Activated naive CD4-positive, alpha-beta T cell treated with anti-CD3 and anti-CD28 coated beads, Interleukin-2, amount 10 ng/mL, durations not matched to agents 7 days and 5 days (primary cell): ENCODE measurements at regions of chr20 and their contacts with region 1.

Region 1: DNA sequence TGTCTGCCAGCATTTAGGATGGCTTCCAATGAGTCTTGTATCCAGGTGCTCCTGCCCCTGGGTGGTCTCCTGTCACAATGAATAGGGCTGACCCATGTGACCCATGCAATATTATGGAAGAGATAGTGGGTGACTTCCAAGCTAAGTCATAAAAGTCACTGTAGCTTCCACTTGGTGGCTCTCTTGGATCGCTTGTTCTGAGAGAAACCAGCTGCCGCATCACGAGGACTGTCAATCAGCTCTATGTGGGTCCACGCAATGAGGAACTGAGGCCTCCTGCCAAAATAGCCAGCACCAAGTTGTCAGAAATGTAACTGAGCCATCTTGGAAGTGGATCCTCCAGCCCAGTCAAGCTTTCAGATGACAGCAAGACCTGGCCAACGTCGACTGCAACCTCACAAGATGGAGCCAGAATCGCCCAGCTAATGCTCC is 14.9 kb upstream of the MATN4 start:
- DNase-seq: no peak
- H3K4me3 Mint-ChIP-seq: no peak overlapping the region
- H3K27ac Mint-ChIP-seq: no peak overlapping the region
- H3K4me1 Mint-ChIP-seq: peaks cover 35% of the 10 kb centered on the region
- H3K27me3 Mint-ChIP-seq: peaks cover 9% of the 10 kb centered on the region

Region 2: DNA sequence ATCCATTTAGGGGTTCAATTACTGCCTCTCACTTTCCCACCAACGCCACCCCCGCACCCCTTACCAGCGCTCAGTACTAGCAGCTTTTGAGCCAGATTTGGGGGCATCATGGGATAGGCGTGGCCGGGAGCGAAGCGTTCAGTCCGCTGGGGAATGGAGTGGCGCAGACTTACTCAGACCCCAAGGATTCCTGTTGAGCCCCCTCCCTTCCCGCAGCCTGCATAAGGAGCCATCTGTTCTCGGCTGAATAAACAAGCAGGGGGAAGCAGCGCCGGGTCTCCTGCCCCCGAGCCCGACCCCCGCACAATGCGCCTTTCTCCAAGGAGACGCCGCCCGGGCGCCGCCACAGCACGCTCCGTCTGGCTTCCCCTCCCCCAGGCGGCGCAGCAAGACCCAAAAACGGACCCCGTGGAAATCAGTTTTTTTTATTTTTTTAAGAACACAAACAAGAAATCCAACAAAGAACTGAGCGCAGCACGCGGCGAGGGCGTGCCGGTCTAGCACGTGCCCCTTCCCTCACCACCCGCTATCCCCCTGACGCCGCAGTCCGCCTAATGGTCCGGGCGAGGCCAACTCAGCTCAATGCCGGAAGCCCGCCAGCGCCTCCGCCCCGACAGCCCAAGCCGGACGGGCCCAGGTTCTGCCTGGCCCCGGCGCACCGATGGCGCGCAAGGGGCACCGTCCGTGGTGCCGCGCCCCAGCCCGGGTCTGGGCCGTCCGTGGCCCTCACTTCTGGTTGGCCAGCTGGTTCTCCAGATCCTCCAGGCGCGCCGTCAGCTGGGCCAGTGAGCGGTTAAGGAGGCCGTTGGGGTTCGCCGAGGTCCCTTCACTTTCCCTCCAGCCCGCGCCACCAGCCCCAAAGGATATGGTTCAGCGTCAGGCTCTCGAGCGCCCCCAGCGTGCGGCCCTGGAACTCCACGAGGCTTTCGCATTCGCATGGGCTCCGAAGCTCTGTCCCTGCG is 29.6 kb before region 1 on chr20:
- CTCF ChIA-PET with region 1: interaction called, 25 read pairs
- DNase-seq: peak; percentile 87
- H3K4me3 Mint-ChIP-seq: peak overlapping the region; percentile 64
- H3K27ac Mint-ChIP-seq: no peak overlapping the region
- H3K4me1 Mint-ChIP-seq: peaks cover 7% of the 10 kb centered on the region
- H3K27me3 Mint-ChIP-seq: peaks cover 59% of the 10 kb centered on the region

Region 3: DNA sequence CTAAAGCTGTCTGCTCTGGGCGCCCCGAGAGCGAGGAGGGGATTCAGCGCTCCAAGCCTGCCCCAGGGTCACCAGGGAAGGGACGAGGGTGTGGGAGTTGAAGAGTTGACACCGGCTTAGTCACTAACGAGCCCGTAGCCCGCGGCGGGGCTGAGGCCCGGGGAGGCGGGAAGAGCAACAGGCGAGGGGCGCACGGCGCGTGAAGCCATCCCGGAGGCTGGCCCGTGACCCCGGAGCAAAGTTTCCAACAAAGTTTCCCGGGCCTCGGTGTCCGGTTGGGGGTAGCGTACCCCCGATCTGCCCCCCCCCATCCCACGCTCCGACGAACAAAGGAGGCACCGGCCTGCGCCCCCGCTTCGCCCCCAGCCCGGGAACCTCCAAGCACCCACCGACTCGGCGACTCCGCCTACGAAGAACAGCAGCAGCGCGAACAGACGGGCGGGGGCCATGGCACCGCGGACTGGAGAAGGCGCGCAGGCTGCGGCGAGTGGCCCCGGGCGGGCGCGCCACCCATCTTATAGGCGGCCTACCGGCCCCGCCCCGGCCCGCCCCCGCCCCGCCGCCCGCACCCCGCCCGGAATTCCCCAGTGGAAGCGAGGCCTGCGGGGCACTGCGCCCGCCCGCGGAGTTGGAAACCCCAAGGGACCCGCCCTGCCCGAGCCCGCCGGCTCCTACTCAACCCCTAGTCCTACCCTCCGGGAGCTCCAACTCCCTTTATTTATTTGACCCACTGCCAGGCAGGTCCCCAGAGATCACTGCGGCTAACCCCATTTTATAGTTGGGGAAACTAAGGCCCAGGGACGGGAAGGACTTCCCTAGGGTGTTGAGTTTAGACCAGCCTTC is 25.2 kb after region 1 on chr20 and contains the start of gene SDC4:
- CTCF ChIA-PET with region 1: interaction called, 16 read pairs
- DNase-seq: peak; percentile 64
- H3K4me3 Mint-ChIP-seq: peak within 1 kb of the TSS; percentile 77
- H3K27ac Mint-ChIP-seq: no peak within 1 kb of the TSS
- H3K4me1 Mint-ChIP-seq: peaks cover 24% of the 10 kb centered on the region
- H3K27me3 Mint-ChIP-seq: peaks cover 38% of the 10 kb centered on the region

Region 4: DNA sequence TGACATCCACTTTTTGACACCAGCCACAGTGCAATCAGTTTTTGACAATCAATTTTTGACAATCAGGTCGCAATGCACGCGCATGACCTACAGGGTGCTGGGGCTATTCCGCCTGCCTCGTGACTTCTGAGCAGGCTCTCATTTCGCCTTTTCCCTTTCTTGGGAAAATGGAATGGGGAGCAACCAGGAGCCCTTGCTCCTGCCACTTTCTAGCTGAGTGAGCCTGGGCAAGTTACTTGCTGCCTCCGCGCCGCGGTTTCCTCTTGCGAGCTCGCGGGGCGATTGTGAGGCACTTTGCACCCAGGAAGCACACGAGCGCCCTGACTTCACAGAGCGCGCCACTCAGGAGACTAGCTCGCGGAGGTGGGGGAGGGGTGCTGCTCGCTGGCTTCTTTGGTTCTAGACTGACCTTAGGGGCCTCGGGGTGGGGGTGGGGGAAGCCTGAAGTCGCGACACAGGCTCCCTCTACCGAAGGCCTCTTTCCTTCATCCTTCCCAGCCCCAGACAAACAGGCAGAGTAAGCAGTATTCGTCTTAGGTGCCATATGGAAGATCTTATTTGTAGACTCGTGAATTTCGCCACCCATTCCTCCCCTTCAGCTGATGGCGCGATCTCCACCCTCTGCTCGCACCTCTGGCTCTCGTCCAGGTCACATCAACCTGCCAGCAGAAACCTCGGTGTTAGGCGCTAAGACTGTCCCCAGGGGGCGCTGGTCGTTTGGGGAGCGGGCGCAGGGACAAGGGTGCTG is 50.6 kb after region 1 on chr20:
- CTCF ChIA-PET with region 1: interaction called, 27 read pairs
- DNase-seq: peak; percentile 90
- H3K4me3 Mint-ChIP-seq: peak overlapping the region; percentile 70
- H3K27ac Mint-ChIP-seq: peak overlapping the region; percentile 87
- H3K4me1 Mint-ChIP-seq: peaks cover 44% of the 10 kb centered on the region
- H3K27me3 Mint-ChIP-seq: no peaks in the 10 kb centered on the region

Region 5: DNA sequence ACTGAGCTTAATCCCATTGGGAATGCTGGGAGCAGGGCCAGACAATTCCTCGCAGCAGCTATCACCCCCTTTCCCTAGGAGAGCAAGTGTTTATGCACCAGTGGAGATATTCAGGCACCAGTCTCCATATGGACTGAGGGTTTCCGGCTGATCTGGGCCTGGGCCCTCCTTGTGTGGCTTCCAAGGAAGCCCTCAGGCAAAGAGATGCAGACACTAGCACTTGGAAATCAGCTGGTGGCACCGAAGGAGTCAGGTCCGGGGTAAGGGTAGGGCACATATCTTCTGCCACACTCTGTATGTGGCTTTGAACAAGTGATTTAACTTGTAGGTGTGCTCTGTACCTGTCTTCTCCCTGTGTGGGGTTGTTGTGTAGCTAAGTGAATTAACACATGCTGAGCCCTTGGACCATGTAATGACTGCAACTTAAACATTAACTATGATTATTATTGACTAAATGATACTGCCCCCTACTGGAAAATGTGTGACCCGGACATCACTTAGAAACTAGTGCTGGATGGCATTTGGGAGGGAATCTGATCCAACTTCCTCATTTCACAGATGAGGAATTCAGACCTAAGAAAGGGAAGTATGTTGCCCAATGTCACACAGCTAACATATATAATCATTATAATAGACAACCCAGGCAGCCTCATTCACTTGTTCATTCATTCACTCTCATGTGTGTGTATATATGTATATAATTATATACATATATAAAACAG is 127.3 kb after region 1 on chr20:
- CTCF ChIA-PET with region 1: interaction called, 27 read pairs
- DNase-seq: peak; percentile 41
- H3K4me3 Mint-ChIP-seq: no peak overlapping the region
- H3K27ac Mint-ChIP-seq: no peak overlapping the region
- H3K4me1 Mint-ChIP-seq: peaks cover 11% of the 10 kb centered on the region
- H3K27me3 Mint-ChIP-seq: peaks cover 24% of the 10 kb centered on the region

Region 6: GRCh38 chr20:45771182-45771759 is 448.3 kb after region 1 on chr20:
- CTCF ChIA-PET with region 1: interaction called, 40 read pairs
- DNase-seq: peak; percentile 88
- H3K4me3 Mint-ChIP-seq: no peak overlapping the region
- H3K27ac Mint-ChIP-seq: no peak overlapping the region
- H3K4me1 Mint-ChIP-seq: peaks cover 4% of the 10 kb centered on the region
- H3K27me3 Mint-ChIP-seq: peaks cover 26% of the 10 kb centered on the region